ENCODE measurements at regions of chr10 and their contacts with region 1.

Region 1: DNA sequence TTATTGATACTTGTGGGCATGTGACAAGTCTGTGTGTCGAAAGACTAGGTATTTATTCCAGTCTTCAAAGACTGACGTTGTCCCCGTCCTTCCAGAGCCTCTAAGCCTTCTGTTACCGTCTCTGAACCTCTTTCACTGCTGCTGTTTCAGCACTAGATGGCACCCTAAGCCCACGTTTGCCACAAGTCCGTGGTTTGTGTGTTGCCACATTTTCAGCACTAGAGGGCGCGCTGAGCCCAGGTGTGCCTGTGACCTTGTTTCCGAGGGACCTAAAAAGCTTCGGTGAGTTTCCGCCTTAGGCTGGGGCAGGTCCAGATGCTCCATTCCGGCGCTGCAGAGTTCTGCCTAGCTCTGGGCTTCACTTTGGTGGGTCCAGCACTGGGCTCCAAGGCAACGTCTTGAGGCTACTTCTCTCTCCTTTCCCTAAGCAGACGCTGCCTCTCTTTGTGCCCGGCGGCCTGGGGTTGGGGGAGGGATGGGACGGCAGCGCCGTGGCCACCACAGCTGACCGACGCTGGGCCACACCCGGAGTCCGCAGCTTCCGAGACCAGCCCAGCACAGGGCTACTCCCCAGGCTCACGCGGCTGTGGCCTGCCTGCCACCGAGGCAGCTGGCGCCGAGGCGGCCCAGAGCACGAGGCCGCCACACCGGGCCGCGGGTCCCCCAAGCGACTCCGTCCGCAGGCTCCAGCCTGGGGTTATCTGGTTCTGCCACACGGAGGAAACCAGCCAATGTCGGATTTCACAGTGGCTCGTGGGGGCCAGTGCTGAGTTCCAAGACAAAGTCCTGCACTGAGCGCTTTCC is 520.2 kb downstream of the REEP3 start:
- DNase-seq: peak; percentile 85
- ATAC-seq: peak; percentile 91
- H3K4me3 Mint-ChIP-seq: peak overlapping the region; percentile 25; the same call in 1 of the 2 replicates
- H3K27ac Mint-ChIP-seq: no peak overlapping the region
- H3K4me1 Mint-ChIP-seq: peaks cover 6% of the 10 kb centered on the region
- H3K27me3 Mint-ChIP-seq: no peaks in the 10 kb centered on the region
- CTCF ChIP-seq: peak; percentile 99

Region 2: GRCh38 chr10:64086083-64086767 is 44.8 kb after region 1 on chr10:
- CTCF ChIA-PET with region 1: interaction called, 26 read pairs
- POLR2A ChIA-PET with region 1: no interaction called
- DNase-seq: peak; percentile 29
- ATAC-seq: peak; percentile 91
- H3K4me3 Mint-ChIP-seq: peak overlapping the region; percentile 32
- H3K27ac Mint-ChIP-seq: no peak overlapping the region
- H3K4me1 Mint-ChIP-seq: peaks cover 48% of the 10 kb centered on the region
- H3K27me3 Mint-ChIP-seq: peaks cover 63% of the 10 kb centered on the region
- CTCF ChIP-seq: no peak

Region 3: GRCh38 chr10:64115913-64116643 is 74.7 kb after region 1 on chr10:
- CTCF ChIA-PET with region 1: interaction called, 13 read pairs
- POLR2A ChIA-PET with region 1: no interaction called
- DNase-seq: peak; percentile 56
- ATAC-seq: peak; percentile 79
- H3K4me3 Mint-ChIP-seq: no peak overlapping the region
- H3K27ac Mint-ChIP-seq: peak overlapping the region; percentile 48; the same call in 1 of the 2 replicates
- H3K4me1 Mint-ChIP-seq: peaks cover 63% of the 10 kb centered on the region
- H3K27me3 Mint-ChIP-seq: no peaks in the 10 kb centered on the region
- CTCF ChIP-seq: peak; percentile 9; the same call in 1 of the 2 replicates

Region 4: GRCh38 chr10:64201936-64202335 is 160.5 kb after region 1 on chr10:
- CTCF ChIA-PET with region 1: no interaction called
- POLR2A ChIA-PET with region 1: no interaction called
- DNase-seq: no peak
- ATAC-seq: no peak
- H3K4me3 Mint-ChIP-seq: no peak overlapping the region
- H3K27ac Mint-ChIP-seq: no peak overlapping the region
- H3K4me1 Mint-ChIP-seq: no peaks in the 10 kb centered on the region
- H3K27me3 Mint-ChIP-seq: no peaks in the 10 kb centered on the region
- CTCF ChIP-seq: no peak

Region 5: GRCh38 chr10:64430690-64431323 is 389.4 kb after region 1 on chr10:
- CTCF ChIA-PET with region 1: interaction called, 12 read pairs
- POLR2A ChIA-PET with region 1: no interaction called
- DNase-seq: peak; percentile 68
- ATAC-seq: peak; percentile 99
- H3K4me3 Mint-ChIP-seq: no peak overlapping the region
- H3K27ac Mint-ChIP-seq: no peak overlapping the region
- H3K4me1 Mint-ChIP-seq: peaks cover 3% of the 10 kb centered on the region; the same call in 1 of the 2 replicates
- H3K27me3 Mint-ChIP-seq: no peaks in the 10 kb centered on the region; the same call in 1 of the 2 replicates
- CTCF ChIP-seq: no peak

Measured in WTC11 (cell line).